ENCODE measurements at regions of chr13 and their contacts with region 1.

Region 1: GRCh38 chr13:97432917-97433726 is 847 bp upstream of the RAP2A start:
- DNase-seq: peak; percentile 99
- ATAC-seq: peak; percentile 73
- H3K4me3 Mint-ChIP-seq: peak overlapping the region; percentile 94
- H3K27ac Mint-ChIP-seq: peak overlapping the region; percentile 97
- H3K4me1 Mint-ChIP-seq: peaks cover 32% of the 10 kb centered on the region
- H3K27me3 Mint-ChIP-seq: no peaks in the 10 kb centered on the region
- CTCF ChIP-seq: no peak

Region 2: DNA sequence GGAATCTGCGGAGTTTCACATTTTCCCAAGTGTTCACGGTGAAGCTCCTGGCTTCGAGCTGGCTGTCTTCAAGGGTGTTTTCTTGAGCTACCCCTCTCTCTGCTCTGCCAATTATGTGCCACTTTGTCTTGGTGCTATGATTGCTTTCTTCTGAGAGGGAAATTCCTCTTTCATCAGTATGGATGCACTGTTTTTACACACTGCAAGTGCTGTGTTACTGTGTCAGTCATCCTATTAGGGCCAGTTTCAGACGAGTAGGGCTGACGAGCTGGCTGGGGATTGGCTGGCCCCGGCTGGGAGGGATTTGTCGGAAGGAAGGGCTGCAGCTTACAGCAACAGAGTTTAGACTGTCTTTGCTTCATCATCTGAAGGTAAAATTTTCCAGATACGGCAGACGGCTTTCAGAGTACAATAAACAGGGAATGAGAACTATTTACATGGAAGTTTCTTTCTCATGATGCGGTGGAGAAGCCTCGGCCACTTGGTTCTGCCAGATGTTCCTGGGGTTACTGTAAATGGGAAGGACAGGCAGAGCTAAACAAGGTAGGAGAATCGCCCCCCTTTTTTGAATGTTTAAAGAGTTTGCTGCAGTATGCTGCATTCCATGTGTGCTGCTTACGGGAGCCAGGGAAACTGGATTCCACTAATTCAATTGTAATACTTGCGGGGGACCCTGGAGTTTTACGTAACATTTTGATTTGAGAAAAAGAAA is 211.0 kb before region 1 on chr13 and contains the start of gene MBNL2:
- CTCF ChIA-PET with region 1: no interaction called
- POLR2A ChIA-PET with region 1: interaction called, 29 read pairs
- intact Hi-C with region 1: loop called (anchors 1 kb)
- DNase-seq: peak; percentile 67
- ATAC-seq: peak; percentile 98
- H3K4me3 Mint-ChIP-seq: peak within 1 kb of the TSS; percentile 89
- H3K27ac Mint-ChIP-seq: peak within 1 kb of the TSS; percentile 92
- H3K4me1 Mint-ChIP-seq: peaks cover 51% of the 10 kb centered on the region
- H3K27me3 Mint-ChIP-seq: no peaks in the 10 kb centered on the region
- CTCF ChIP-seq: no peak
- total RNA-seq, gene MBNL2: 15.3 and 18.8 TPM in 2 replicates

Region 3: GRCh38 chr13:97448503-97449230 is 15.5 kb after region 1 on chr13:
- CTCF ChIA-PET with region 1: no interaction called
- POLR2A ChIA-PET with region 1: interaction called, 4 read pairs
- intact Hi-C with region 1: loop called (anchors 1 kb)
- DNase-seq: no peak
- ATAC-seq: no peak
- H3K4me3 Mint-ChIP-seq: no peak overlapping the region
- H3K27ac Mint-ChIP-seq: no peak overlapping the region
- H3K4me1 Mint-ChIP-seq: peaks cover 2% of the 10 kb centered on the region
- H3K27me3 Mint-ChIP-seq: no peaks in the 10 kb centered on the region
- CTCF ChIP-seq: no peak

Region 4: DNA sequence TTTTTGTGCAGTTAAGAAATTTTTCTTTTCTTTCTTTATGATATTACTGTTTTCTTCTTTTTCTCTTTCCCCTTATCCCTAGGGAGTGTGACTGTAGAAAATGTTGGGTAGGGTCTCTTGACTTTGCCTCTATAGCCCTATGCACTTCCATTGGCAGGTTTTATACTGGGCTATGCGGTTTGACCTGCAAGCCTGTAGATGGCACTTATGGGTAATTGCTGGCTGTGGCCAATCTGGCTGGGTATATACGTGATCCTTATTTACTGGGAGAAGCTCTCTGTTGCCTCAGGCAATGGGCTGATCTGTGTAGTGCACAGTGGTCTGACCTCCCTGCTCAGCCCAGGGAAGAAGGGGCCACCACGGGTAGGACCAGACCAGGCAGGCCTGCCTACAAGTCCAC is 79.6 kb after region 1 on chr13:
- CTCF ChIA-PET with region 1: no interaction called
- POLR2A ChIA-PET with region 1: no interaction called
- intact Hi-C with region 1: no loop called
- DNase-seq: no peak
- ATAC-seq: no peak
- H3K4me3 Mint-ChIP-seq: no peak overlapping the region
- H3K27ac Mint-ChIP-seq: no peak overlapping the region
- H3K4me1 Mint-ChIP-seq: no peaks in the 10 kb centered on the region
- H3K27me3 Mint-ChIP-seq: peaks cover 18% of the 10 kb centered on the region
- CTCF ChIP-seq: no peak

Region 5: DNA sequence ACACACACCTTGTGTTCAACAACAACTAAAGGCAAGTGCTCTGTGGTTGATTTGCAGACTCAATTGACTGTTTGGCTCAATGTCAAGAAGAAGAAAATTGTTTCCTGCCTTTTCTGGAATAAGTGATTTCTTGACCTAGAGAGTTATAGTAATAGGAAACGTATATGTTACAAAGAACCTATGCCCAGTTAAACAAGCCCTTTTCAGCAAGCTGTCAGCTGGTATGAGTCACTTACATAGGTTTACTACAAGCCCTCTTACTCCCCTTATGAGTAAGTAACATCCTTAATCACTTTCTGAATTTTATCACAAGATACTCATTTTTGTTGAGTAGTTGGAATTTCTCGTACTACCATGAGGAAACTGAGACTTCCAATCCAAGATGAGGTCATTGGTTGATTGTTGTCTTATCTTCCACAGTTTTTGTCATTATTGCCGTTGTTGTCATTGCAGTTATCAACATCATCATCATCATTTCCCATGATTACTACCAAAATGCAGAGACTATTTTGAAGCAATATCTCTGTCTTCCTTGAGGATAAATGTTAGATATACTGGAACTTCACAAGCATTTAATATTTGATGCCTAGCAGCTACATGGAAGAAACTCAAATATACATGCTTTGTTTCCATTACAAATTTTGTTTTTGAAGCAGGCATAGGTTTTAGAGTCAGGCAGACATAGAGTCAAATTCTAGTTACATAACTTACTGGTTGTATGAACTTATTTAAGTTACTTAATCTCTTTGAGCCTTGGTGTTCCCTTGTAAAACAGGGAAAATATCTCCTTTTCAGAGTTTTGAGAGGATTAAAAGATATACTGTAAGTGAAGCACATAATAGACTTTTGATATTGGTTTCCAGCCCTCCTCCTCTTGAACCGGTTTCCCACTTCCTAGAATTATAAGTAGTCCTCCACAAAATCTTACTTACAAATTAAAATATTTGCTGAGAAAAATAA is 106.8 kb after region 1 on chr13:
- CTCF ChIA-PET with region 1: no interaction called
- POLR2A ChIA-PET with region 1: no interaction called
- intact Hi-C with region 1: loop called (anchors 10 kb)
- DNase-seq: no peak
- ATAC-seq: no peak
- H3K4me3 Mint-ChIP-seq: no peak overlapping the region
- H3K27ac Mint-ChIP-seq: no peak overlapping the region
- H3K4me1 Mint-ChIP-seq: no peaks in the 10 kb centered on the region
- H3K27me3 Mint-ChIP-seq: peaks cover 6% of the 10 kb centered on the region
- CTCF ChIP-seq: no peak

Region 6: GRCh38 chr13:97695684-97696083 is 262.6 kb after region 1 on chr13:
- CTCF ChIA-PET with region 1: no interaction called
- POLR2A ChIA-PET with region 1: no interaction called
- intact Hi-C with region 1: no loop called
- DNase-seq: no peak
- ATAC-seq: no peak
- H3K4me3 Mint-ChIP-seq: no peak overlapping the region
- H3K27ac Mint-ChIP-seq: no peak overlapping the region
- H3K4me1 Mint-ChIP-seq: no peaks in the 10 kb centered on the region
- H3K27me3 Mint-ChIP-seq: no peaks in the 10 kb centered on the region
- CTCF ChIP-seq: no peak

Region 7: GRCh38 chr13:97726664-97727280 is 293.6 kb after region 1 on chr13:
- CTCF ChIA-PET with region 1: no interaction called
- POLR2A ChIA-PET with region 1: no interaction called
- intact Hi-C with region 1: no loop called
- DNase-seq: no peak
- ATAC-seq: no peak
- H3K4me3 Mint-ChIP-seq: no peak overlapping the region
- H3K27ac Mint-ChIP-seq: no peak overlapping the region
- H3K4me1 Mint-ChIP-seq: no peaks in the 10 kb centered on the region
- H3K27me3 Mint-ChIP-seq: no peaks in the 10 kb centered on the region
- CTCF ChIP-seq: no peak

Region 8: GRCh38 chr13:97798836-97799235 is 365.7 kb after region 1 on chr13:
- CTCF ChIA-PET with region 1: no interaction called
- POLR2A ChIA-PET with region 1: no interaction called
- intact Hi-C with region 1: loop called (anchors 5 kb)
- DNase-seq: no peak
- ATAC-seq: no peak
- H3K4me3 Mint-ChIP-seq: no peak overlapping the region
- H3K27ac Mint-ChIP-seq: no peak overlapping the region
- H3K4me1 Mint-ChIP-seq: no peaks in the 10 kb centered on the region
- H3K27me3 Mint-ChIP-seq: peaks cover 2% of the 10 kb centered on the region
- CTCF ChIP-seq: no peak

Region 9: DNA sequence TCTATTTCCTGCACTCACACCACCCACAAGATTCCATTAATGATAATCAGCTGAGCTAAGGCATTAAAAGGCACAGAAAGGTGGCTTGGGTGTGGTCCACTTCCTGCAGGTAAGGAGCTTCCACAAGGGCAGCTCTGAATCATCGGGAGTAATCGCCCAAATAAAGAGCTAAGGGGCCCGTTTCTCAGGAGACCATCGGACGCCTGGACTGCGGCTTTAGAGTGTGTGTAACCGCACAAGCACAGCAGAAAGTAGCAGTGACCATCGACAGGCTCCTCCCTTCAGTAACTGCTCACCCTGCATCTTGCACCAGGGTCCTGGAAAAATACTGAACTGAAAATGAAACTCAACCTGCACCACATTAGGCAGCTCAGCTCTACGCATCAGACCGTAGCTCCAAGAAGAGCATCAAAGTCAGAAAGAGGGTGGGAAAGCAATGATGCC is 1137.8 kb after region 1 on chr13:
- CTCF ChIA-PET with region 1: no interaction called
- POLR2A ChIA-PET with region 1: interaction called, 4 read pairs
- intact Hi-C with region 1: loop called (anchors 1 kb)
- DNase-seq: peak; percentile 39
- ATAC-seq: peak; percentile 84
- H3K4me3 Mint-ChIP-seq: peak overlapping the region; percentile 82
- H3K27ac Mint-ChIP-seq: peak overlapping the region; percentile 91
- H3K4me1 Mint-ChIP-seq: peaks cover 99% of the 10 kb centered on the region
- H3K27me3 Mint-ChIP-seq: no peaks in the 10 kb centered on the region
- CTCF ChIP-seq: no peak

Measured in activated B cell treated with CpG ODN at 0.5 μM for 24 hours (primary cell).